IMR-90 (cell line): ENCODE measurements at regions of chr1 and their contacts with region 1.

Region 1: DNA sequence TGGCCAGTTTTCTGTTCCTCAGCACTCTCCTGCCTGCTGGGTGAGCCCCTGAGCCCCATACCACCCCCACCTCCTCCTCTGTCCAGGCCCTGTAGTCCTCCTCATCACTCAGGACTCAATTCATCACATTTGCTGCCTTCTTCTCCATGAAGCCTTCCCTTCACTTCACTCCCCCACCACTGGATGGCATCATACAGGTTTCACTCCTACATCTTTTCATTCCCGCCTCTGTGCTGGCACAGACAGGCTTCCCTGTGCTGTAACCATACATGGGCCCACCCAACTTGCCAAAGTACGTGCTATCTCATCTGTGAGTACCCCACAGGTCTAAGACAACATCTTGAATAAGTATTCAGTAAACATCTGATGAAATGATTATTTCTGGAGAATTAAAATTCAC is 56.9 kb downstream of the SLC45A1 start:
- DNase-seq: peak; percentile 56
- ATAC-seq: no peak
- H3K4me3 ChIP-seq: no peak overlapping the region
- H3K27ac ChIP-seq: peak overlapping the region; percentile 79
- H3K4me1 ChIP-seq: peaks cover 63% of the 10 kb centered on the region
- H3K27me3 ChIP-seq: no peaks in the 10 kb centered on the region
- CTCF ChIP-seq: peak; percentile 47
- POLR2A ChIP-seq: no peak
- RAD21 ChIP-seq: peak; percentile 40

Region 2: DNA sequence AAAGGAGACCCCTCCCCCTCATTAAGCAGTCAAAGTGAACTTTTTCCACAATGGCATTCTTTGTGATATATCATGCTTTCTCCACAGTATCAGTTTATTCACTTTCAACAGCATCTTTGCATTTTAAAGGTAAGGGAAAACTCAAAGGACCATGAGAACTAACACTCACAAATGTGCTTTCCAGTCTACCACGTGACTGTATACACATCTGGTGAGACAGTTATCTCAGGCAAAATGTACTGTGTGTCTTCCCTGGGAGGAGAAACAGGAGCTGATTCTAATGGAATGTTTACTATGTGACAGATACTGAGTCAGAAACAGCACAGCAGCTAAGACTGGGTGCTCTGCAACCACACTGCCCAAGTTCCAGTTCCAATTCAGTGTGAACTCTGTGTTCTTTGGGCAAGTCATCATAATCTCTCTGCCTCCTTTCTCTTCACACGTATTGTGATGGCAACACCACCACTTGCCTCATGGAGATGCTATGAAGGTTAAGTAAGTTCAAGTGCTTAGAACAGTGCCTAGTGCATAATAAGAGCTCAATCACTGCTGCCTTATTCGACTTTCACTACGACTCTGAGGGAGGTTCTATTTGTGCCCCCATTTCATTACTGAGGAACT is 22.1 kb after region 1 on chr1:
- CTCF ChIA-PET with region 1: no interaction called
- POLR2A ChIA-PET with region 1: no interaction called
- dilution Hi-C with region 1: no loop called
- in situ Hi-C with region 1: no loop called
- intact Hi-C with region 1: loop called (anchors 2 kb)
- DNase-seq: peak; percentile 99
- ATAC-seq: peak; percentile 79
- H3K4me3 ChIP-seq: no peak overlapping the region; the same call in 1 of the 2 replicates
- H3K27ac ChIP-seq: peak overlapping the region; percentile 53; the same call in 1 of the 2 replicates
- H3K4me1 ChIP-seq: peaks cover 29% of the 10 kb centered on the region
- H3K27me3 ChIP-seq: no peaks in the 10 kb centered on the region
- CTCF ChIP-seq: no peak
- POLR2A ChIP-seq: peak; percentile 75; the same call in 1 of the 2 replicates
- RAD21 ChIP-seq: no peak; the same call in none of the 2 replicates

Region 3: GRCh38 chr1:8660411-8660828 is 285.6 kb after region 1 on chr1:
- CTCF ChIA-PET with region 1: no interaction called
- POLR2A ChIA-PET with region 1: no interaction called
- dilution Hi-C with region 1: no loop called
- in situ Hi-C with region 1: no loop called
- intact Hi-C with region 1: loop called (anchors 10 kb)
- DNase-seq: peak; percentile 94
- ATAC-seq: peak; percentile 91
- H3K4me3 ChIP-seq: no peak overlapping the region; the same call in 1 of the 2 replicates
- H3K27ac ChIP-seq: peak overlapping the region; percentile 15; the same call in 1 of the 2 replicates
- H3K4me1 ChIP-seq: peaks cover 30% of the 10 kb centered on the region
- H3K27me3 ChIP-seq: no peaks in the 10 kb centered on the region
- CTCF ChIP-seq: no peak
- POLR2A ChIP-seq: peak; percentile 39; the same call in 1 of the 2 replicates
- RAD21 ChIP-seq: no peak; the same call in 1 of the 2 replicates